ENCODE measurements at regions of chr3 and their contacts with region 1.

Region 1: GRCh38 chr3:29759411-29760225 is 478.7 kb downstream of the RBMS3 start:
- DNase-seq: peak; percentile 53
- H3K4me3 ChIP-seq: no peak overlapping the region
- H3K27ac ChIP-seq: peak overlapping the region; percentile 98
- H3K4me1 ChIP-seq: peaks cover 47% of the 10 kb centered on the region
- H3K27me3 ChIP-seq: no peaks in the 10 kb centered on the region
- CTCF ChIP-seq: no peak
- POLR2A ChIP-seq: no peak

Region 2: GRCh38 chr3:29128001-29128400 is 631.6 kb before region 1 on chr3:
- CTCF ChIA-PET with region 1: no interaction called
- POLR2A ChIA-PET with region 1: no interaction called
- dilution Hi-C with region 1: no loop called
- intact Hi-C with region 1: loop called (anchors 5 kb)
- DNase-seq: peak; percentile 90
- H3K4me3 ChIP-seq: no peak overlapping the region
- H3K27ac ChIP-seq: peak overlapping the region; percentile 47
- H3K4me1 ChIP-seq: peaks cover 15% of the 10 kb centered on the region
- H3K27me3 ChIP-seq: no peaks in the 10 kb centered on the region
- CTCF ChIP-seq: no peak
- POLR2A ChIP-seq: no peak

Region 3: GRCh38 chr3:29324180-29324651 is 435.4 kb before region 1 on chr3:
- CTCF ChIA-PET with region 1: no interaction called
- POLR2A ChIA-PET with region 1: no interaction called
- dilution Hi-C with region 1: no loop called
- intact Hi-C with region 1: loop called (anchors 1 kb)
- DNase-seq: peak; percentile 98
- H3K4me3 ChIP-seq: peak overlapping the region in 2 of 3 experiments; percentile 22 to 49
- H3K27ac ChIP-seq: peak overlapping the region; percentile 98
- H3K4me1 ChIP-seq: peaks cover 22% of the 10 kb centered on the region
- H3K27me3 ChIP-seq: no peaks in the 10 kb centered on the region
- CTCF ChIP-seq: no peak
- POLR2A ChIP-seq: peak; percentile 69

Region 4: DNA sequence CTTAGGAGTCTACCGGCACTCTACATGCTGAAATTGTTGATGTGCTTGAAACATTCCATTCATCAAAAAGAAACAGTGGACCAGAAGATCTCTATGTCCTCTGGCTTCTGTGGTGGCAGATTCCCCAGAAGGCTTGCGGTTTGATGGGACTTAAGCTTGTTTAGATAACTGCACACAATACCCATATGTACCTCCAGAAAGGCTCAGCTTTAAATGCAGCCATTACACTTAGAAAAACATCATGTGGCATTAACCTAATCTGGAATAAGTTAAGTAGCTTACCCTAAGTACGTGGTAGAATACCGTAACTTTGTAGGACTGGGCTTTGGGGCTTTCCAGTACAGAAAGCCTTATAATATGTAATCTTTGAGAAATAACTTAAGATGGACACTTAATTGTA is 291.4 kb before region 1 on chr3:
- CTCF ChIA-PET with region 1: no interaction called
- POLR2A ChIA-PET with region 1: no interaction called
- dilution Hi-C with region 1: no loop called
- intact Hi-C with region 1: no loop called
- DNase-seq: no peak
- H3K4me3 ChIP-seq: no peak overlapping the region
- H3K27ac ChIP-seq: no peak overlapping the region
- H3K4me1 ChIP-seq: no peaks in the 10 kb centered on the region
- H3K27me3 ChIP-seq: no peaks in the 10 kb centered on the region
- CTCF ChIP-seq: no peak
- POLR2A ChIP-seq: no peak

Region 5: GRCh38 chr3:29537889-29538609 is 221.6 kb before region 1 on chr3:
- CTCF ChIA-PET with region 1: interaction called, 3 read pairs
- POLR2A ChIA-PET with region 1: no interaction called
- dilution Hi-C with region 1: no loop called
- intact Hi-C with region 1: loop called (anchors 1 kb)
- DNase-seq: peak; percentile 77
- H3K4me3 ChIP-seq: no peak overlapping the region
- H3K27ac ChIP-seq: peak overlapping the region; percentile 40
- H3K4me1 ChIP-seq: peaks cover 26% of the 10 kb centered on the region
- H3K27me3 ChIP-seq: no peaks in the 10 kb centered on the region
- CTCF ChIP-seq: no peak
- POLR2A ChIP-seq: no peak

Region 6: DNA sequence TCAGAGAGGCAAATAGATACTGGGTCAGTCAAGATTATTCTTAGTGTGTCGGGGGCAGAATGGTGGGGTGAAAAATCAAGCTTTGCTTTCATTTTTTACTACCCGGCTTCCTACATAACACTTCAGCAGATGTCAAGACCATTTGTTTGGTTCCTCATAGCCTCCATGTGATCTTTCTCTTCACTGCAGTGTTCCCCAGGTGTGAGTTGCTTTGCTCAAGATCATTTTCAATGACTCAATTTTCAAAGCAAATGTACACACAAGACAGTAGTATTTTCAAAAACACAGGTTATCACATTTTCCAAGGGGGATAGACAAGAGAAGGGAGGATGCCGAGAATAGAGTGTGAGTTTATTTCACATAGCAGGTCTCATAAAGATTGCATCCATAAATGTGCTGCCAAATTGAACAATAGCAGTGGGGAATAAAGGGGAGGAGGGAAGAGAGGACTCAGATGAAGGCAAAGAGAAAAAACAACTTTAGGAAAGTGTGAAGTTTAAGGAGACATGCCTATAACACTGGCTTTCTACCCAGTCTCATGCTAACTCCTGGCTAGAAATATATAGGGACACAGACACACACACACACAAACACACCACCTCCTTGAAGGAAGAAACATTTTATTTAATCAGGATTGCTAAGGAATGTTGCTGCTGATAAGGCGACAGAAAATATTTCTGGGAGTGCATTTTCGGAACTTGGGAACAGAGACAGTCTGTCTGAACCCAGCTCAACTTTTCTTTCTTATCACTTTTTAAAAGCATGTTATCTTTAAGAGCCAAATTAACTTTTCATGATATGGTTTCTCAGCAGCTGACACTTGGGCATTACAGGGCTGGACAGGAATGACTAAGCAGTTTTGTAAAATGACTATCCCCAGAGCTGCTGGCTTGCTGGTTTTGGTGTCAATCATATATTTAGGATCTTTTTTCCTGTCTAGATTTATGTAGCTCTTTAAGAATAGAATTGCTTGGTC is 76.3 kb before region 1 on chr3:
- CTCF ChIA-PET with region 1: interaction called, 3 read pairs
- POLR2A ChIA-PET with region 1: no interaction called
- dilution Hi-C with region 1: no loop called
- intact Hi-C with region 1: loop called (anchors 1 kb)
- DNase-seq: peak; percentile 92
- H3K4me3 ChIP-seq: no peak overlapping the region
- H3K27ac ChIP-seq: peak overlapping the region; percentile 94
- H3K4me1 ChIP-seq: peaks cover 40% of the 10 kb centered on the region
- H3K27me3 ChIP-seq: no peaks in the 10 kb centered on the region
- CTCF ChIP-seq: no peak
- POLR2A ChIP-seq: peak; percentile 47

Region 7: GRCh38 chr3:29978036-29978435 is 218.4 kb after region 1 on chr3:
- CTCF ChIA-PET with region 1: no interaction called
- POLR2A ChIA-PET with region 1: no interaction called
- dilution Hi-C with region 1: no loop called
- intact Hi-C with region 1: no loop called
- DNase-seq: no peak
- H3K4me3 ChIP-seq: no peak overlapping the region
- H3K27ac ChIP-seq: no peak overlapping the region
- H3K4me1 ChIP-seq: peaks cover 11% of the 10 kb centered on the region
- H3K27me3 ChIP-seq: no peaks in the 10 kb centered on the region
- CTCF ChIP-seq: no peak
- POLR2A ChIP-seq: no peak

Region 8: DNA sequence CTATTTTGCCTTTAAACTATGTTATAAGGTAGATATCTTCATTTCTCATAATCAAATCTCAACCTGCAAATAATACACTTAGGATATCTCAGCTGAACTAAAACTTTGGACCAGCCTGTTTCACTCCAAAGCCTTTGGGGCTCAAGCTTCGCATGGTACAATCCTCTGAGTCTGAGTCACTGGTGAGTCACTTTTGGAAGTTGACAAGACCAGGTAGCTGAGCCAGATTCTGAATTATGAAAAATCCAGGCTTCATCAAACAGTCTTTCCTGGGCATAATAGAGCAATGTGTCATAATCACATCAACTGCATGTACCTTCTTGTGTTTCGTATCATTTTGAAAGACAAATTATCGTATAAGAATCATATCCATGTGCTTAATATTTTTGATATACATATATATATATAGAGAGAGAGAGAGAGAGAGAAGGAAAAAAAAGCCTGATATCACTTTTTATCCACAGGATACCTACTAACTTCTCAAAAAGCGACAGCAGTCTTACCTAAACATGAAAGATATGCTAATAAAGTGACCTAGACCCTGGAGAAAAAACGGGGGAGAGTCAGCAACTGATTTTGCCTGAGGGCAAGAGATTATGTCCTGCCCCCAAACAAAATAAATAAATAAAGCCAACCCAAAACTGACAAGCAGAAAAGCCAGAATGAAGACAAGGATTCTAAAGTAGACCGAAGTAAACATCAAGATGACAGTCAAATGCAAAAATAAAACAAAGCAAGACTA is 582.9 kb after region 1 on chr3:
- CTCF ChIA-PET with region 1: no interaction called
- POLR2A ChIA-PET with region 1: no interaction called
- dilution Hi-C with region 1: no loop called
- intact Hi-C with region 1: loop called (anchors 2 kb)
- DNase-seq: peak; percentile 94
- H3K4me3 ChIP-seq: peak overlapping the region in 1 of 3 experiments; percentile 32
- H3K27ac ChIP-seq: peak overlapping the region; percentile 98
- H3K4me1 ChIP-seq: peaks cover 62% of the 10 kb centered on the region
- H3K27me3 ChIP-seq: no peaks in the 10 kb centered on the region
- CTCF ChIP-seq: no peak
- POLR2A ChIP-seq: no peak

Measured in endothelial cell of umbilical vein (primary cell).